ENCODE measurements at regions of chr2 and their contacts with region 1.

Region 1: GRCh38 chr2:159712143-159712928 is at the start of gene MARCHF7:
- DNase-seq: peak; percentile 94

Region 2: GRCh38 chr2:159615140-159615951 is 97.0 kb before region 1 on chr2:
- CTCF ChIA-PET with region 1: no interaction called
- POLR2A ChIA-PET with region 1: interaction called, 10 read pairs
- DNase-seq: peak; percentile 61

Region 3: DNA sequence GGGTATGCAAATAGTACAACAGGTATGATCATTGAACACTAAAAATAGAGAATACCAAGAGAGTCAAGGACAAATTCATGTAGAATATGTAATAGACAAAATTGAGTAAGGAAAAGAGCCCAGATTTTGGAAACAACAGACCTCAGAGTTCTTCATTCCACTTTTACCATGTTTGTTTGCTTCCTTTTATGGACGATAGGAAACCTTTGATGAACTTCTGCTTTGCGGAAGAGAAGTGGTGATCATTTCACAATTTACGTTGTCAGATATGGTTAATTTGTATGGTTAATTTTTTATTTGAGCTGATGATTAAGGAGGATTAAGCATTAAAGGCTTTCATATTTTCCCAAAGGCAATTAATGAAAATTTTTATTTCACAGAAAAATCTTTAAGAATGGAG is 16.3 kb after region 1 on chr2:
- CTCF ChIA-PET with region 1: no interaction called
- POLR2A ChIA-PET with region 1: no interaction called
- DNase-seq: no peak

Region 4: GRCh38 chr2:159788253-159788652 is 75.9 kb after region 1 on chr2:
- CTCF ChIA-PET with region 1: no interaction called
- POLR2A ChIA-PET with region 1: no interaction called
- DNase-seq: no peak

Region 5: GRCh38 chr2:159855557-159856061 is 143.3 kb after region 1 on chr2:
- CTCF ChIA-PET with region 1: no interaction called
- POLR2A ChIA-PET with region 1: no interaction called
- DNase-seq: no peak

Measured in HEK293T (cell line).